Activated T-helper 1 cell treated with anti-CD3 and anti-CD28 coated beads, Interleukin-12 subunit alpha, Interleukin-12 subunit beta, Interleukin-2, Interleukin-4 antibody, amounts not matched to agents 30 ng/mL and 10 ng/mL and 1 ng/mL, durations not matched to agents 14 hours and 24 hours and 36 hours (primary cell): ENCODE measurements at regions of chr5 and their contacts with region 1.

Region 1: GRCh38 chr5:18699681-18700080 is 1065.4 kb downstream of the TAF11L14 start:
- DNase-seq: no peak
- H3K4me3 Mint-ChIP-seq: no peak overlapping the region
- H3K27ac Mint-ChIP-seq: no peak overlapping the region
- H3K4me1 Mint-ChIP-seq: peaks cover 23% of the 10 kb centered on the region
- H3K27me3 Mint-ChIP-seq: no peaks in the 10 kb centered on the region

Region 2: GRCh38 chr5:17655921-17656320 is 1043.8 kb before region 1 on chr5:
- intact Hi-C with region 1: no loop called
- DNase-seq: no peak
- H3K4me3 Mint-ChIP-seq: no peak overlapping the region
- H3K27ac Mint-ChIP-seq: no peak overlapping the region
- H3K4me1 Mint-ChIP-seq: no peaks in the 10 kb centered on the region
- H3K27me3 Mint-ChIP-seq: no peaks in the 10 kb centered on the region

Region 3: DNA sequence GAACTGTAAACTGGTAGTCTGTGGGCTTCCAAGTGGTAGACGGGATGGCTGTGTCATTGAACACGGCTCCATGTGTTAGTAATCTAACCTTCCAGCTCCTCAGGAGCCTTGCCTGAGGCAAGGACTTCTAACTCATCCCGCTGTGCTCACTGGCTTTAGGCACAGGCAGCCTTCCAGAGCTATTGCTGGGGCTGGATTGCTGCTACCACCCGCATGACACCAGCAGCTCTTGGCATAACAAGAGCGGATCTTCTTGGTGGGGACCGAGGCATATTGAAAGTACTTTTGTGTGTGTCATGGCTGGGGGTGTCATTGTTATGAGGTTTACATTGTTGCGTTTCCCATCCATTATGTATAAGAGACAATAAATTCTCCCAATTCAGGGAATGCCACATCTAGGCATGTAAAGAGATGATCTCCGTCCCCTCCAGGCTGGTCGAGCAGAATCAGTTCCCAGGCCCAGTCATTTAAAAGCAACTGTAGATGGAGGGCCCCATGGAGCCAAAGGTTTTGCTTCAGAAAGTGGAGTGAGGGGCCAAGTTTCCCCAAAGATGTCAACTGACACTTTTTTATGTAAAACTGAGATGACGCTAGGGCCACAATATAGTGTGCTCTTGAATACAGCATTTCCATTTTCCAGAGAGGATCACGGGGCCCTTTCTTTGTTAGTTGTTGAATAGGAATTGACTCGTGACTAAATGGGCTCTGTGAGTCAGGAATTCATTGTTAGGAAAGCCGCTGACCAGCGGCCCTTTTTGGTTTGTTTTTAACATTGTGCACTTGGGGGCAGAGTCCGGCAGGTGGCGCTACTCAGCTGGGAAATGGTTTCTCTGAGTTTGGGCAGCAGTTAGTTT is 305.9 kb before region 1 on chr5:
- intact Hi-C with region 1: loop called (anchors 1 kb)
- DNase-seq: peak; percentile 7
- H3K4me3 Mint-ChIP-seq: no peak overlapping the region
- H3K27ac Mint-ChIP-seq: no peak overlapping the region
- H3K4me1 Mint-ChIP-seq: no peaks in the 10 kb centered on the region
- H3K27me3 Mint-ChIP-seq: no peaks in the 10 kb centered on the region

Region 4: DNA sequence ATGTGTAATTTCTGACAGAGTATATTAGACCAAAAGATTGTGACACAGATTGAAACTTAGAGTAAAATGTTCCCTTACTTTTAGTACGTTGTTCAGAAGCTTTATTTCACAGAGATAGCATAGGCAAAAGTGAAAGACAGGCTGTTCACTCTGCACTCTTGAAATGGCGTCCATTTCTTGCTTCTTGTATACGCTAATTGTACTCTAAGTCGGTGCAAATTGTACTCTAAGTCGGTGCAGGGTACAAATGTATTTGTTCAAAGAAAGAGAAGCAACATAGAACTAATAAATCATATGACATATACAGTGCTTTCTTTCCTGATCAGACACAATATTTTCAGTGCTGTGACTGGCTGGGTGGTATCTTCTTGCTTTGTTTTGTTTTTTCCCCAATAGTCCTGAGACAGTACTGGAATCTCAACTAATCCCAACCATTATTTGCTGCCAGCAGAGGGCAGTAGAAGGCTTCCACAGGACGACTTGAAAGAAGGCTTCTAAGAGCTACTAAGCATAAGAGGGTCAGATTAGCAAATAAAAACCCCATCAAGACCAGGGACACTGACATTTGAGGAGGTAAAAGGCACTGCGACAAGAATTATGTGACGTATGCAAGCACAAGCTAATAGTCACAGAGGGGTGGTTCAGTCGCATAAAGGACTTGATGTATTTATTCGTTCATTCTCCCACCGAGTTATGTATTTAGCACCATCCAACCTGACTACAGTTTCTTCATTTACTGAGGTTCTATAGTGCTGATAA is 233.7 kb before region 1 on chr5:
- intact Hi-C with region 1: loop called (anchors 1 kb)
- DNase-seq: peak; percentile 9
- H3K4me3 Mint-ChIP-seq: no peak overlapping the region
- H3K27ac Mint-ChIP-seq: no peak overlapping the region
- H3K4me1 Mint-ChIP-seq: no peaks in the 10 kb centered on the region
- H3K27me3 Mint-ChIP-seq: no peaks in the 10 kb centered on the region

Region 5: DNA sequence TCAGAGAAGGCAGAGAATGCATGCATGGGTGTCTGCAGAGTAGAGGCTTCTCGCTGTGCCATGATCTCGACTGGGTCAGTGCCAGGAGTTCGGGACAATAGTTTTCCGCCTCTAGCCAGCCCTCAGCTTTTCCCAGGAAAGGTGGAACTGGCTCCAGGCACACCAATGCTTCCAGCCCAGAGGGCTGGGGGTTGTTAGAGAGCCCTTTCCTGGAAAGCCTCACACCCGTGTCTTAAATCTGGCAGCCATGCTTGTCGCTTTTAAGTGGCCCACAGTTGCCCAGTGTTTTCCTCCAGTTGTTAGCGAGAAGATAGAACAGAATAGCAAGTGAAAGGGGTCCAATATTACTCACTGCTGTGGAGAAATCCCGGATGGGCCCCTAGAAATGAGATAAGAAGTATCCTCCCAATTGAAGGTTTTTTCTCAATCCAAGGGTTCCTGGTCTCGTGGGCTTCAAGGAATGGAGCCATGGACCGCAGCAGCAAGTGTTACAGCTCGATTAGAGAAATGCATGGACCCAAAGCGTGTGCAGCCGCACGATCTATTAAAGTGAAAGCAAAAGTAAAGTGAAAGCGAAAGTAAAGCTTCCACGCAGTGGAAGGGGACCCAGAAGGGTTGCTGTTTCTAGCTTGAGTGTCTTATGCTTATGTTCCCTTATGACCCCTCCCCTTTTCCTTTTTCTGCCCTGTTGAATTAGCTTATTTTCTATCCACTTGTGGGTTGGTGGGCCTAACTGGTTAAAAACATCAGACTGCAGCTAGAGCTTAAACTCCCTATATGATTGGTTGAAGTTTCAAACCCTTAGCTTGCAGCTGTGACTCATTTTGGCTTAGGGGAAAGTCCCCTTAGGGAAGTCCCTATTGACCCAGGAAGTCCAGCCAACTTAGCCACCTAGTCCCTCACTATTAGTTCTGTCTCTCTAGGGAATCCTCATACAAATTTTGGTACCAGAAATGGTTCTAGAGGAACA is 46.2 kb after region 1 on chr5:
- intact Hi-C with region 1: loop called (anchors 1 kb)
- DNase-seq: peak; percentile 31
- H3K4me3 Mint-ChIP-seq: peak overlapping the region; percentile 91
- H3K27ac Mint-ChIP-seq: peak overlapping the region; percentile 84
- H3K4me1 Mint-ChIP-seq: peaks cover 63% of the 10 kb centered on the region
- H3K27me3 Mint-ChIP-seq: peaks cover 2% of the 10 kb centered on the region

Region 6: DNA sequence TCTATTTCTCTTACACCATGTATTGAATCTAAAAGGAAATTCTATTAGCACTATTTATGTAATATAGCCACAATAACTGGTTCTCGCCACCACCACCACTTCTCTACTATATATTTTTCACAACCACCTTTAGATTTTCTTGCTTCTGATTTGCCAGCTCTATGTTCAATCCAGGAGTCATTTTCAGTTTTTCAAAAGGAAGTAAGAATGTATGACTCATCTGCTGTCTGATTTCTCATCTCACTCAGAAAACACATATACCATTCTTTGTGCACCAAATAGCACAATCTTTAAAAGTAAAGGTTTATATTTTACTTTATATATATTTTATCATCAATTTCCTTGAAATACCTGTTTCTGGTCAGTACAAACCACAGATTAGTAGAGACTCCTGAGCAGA is 62.1 kb after region 1 on chr5:
- intact Hi-C with region 1: loop called (anchors 1 kb)
- DNase-seq: no peak
- H3K4me3 Mint-ChIP-seq: no peak overlapping the region
- H3K27ac Mint-ChIP-seq: no peak overlapping the region
- H3K4me1 Mint-ChIP-seq: peaks cover 6% of the 10 kb centered on the region
- H3K27me3 Mint-ChIP-seq: peaks cover 3% of the 10 kb centered on the region

Region 7: GRCh38 chr5:19210886-19211285 is 511.2 kb after region 1 on chr5:
- intact Hi-C with region 1: loop called (anchors 5 kb)
- DNase-seq: no peak
- H3K4me3 Mint-ChIP-seq: no peak overlapping the region
- H3K27ac Mint-ChIP-seq: no peak overlapping the region
- H3K4me1 Mint-ChIP-seq: no peaks in the 10 kb centered on the region
- H3K27me3 Mint-ChIP-seq: no peaks in the 10 kb centered on the region